Activated CD4-positive, alpha-beta T cell treated with anti-CD3 and anti-CD28 coated beads for 36 hours (primary cell): ENCODE measurements at regions of chr13 and their contacts with region 1.

Region 1: DNA sequence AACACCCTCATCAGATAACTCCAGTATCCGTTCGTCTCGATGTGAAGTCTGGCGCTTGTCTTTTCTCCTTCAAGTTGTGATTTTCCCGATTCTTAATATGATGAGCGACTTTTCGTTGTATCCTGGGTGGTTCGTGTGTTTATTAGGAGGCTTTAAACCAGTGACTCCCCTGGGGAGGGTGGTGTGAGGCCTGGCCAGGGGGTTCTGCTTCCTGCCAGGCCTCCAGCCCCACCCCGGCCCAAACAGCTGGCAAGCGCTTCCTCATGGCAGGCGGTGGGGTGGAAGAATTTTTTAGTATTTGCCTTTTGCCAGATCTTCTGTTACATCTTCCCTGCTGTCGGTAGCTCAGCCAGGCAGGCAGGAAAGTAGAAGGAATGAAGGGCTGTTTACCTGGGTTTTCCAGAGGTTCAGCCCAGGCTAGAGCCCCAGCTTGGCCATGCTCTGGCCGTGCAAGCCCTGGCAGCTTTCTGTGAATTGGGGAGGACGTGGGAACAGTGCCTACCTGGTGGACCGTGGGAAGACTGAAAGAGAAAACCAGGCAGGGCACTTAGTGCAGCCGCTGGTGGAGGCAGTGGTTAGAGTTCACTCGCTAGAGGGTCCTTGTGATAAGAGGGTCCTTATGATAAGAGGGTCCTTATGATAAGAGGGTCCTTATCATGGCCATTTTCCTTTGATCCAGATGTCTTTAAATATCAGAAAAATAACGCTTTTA is 37.7 kb upstream of the DCUN1D2 start:
- DNase-seq: no peak
- ATAC-seq: no peak
- H3K4me3 Mint-ChIP-seq: no peak overlapping the region
- H3K27ac Mint-ChIP-seq: no peak overlapping the region
- H3K4me1 Mint-ChIP-seq: no peaks in the 10 kb centered on the region
- H3K27me3 Mint-ChIP-seq: no peaks in the 10 kb centered on the region

Region 2: DNA sequence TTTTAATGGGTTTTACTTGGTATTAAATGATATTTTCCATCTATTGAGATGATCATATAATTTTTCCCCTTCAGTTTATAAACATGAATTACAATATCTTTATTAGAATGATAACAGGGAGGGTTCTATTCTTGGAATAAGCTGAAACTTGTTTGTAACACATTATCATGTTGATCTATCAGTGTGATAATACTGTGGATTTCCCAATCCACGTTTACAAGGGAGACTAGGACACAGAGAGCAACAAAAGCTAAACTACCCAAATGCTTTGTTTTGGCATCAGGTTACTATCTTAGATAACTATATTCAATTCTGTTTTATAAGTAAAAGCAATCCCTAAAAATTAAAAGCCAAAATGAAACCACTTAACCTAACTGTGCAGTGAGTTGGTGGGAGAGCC is 1032.8 kb before region 1 on chr13:
- CTCF ChIA-PET with region 1: no interaction called
- POLR2A ChIA-PET with region 1: no interaction called
- intact Hi-C with region 1: no loop called
- DNase-seq: no peak
- ATAC-seq: no peak
- H3K4me3 Mint-ChIP-seq: no peak overlapping the region
- H3K27ac Mint-ChIP-seq: no peak overlapping the region
- H3K4me1 Mint-ChIP-seq: no peaks in the 10 kb centered on the region
- H3K27me3 Mint-ChIP-seq: no peaks in the 10 kb centered on the region

Region 3: GRCh38 chr13:113047587-113047986 is 480.7 kb before region 1 on chr13:
- CTCF ChIA-PET with region 1: no interaction called
- POLR2A ChIA-PET with region 1: interaction called, 17 read pairs
- intact Hi-C with region 1: no loop called
- DNase-seq: no peak
- ATAC-seq: no peak
- H3K4me3 Mint-ChIP-seq: no peak overlapping the region
- H3K27ac Mint-ChIP-seq: no peak overlapping the region
- H3K4me1 Mint-ChIP-seq: no peaks in the 10 kb centered on the region
- H3K27me3 Mint-ChIP-seq: no peaks in the 10 kb centered on the region

Region 4: GRCh38 chr13:113518076-113518803 is 10.0 kb before region 1 on chr13:
- CTCF ChIA-PET with region 1: no interaction called
- POLR2A ChIA-PET with region 1: no interaction called
- intact Hi-C with region 1: no loop called
- DNase-seq: no peak
- ATAC-seq: no peak
- H3K4me3 Mint-ChIP-seq: no peak overlapping the region
- H3K27ac Mint-ChIP-seq: no peak overlapping the region
- H3K4me1 Mint-ChIP-seq: peaks cover 5% of the 10 kb centered on the region
- H3K27me3 Mint-ChIP-seq: no peaks in the 10 kb centered on the region